PC-9 (cell line): ENCODE measurements at regions of chr12 and their contacts with region 1.

Region 1: GRCh38 chr12:100229058-100229637 is 28.5 kb downstream of the ACTR6 start:
- DNase-seq: peak; percentile 28 to 73
- H3K4me3 ChIP-seq: peak overlapping the region; percentile 45; the same call in 1 of the 2 replicates
- H3K27ac ChIP-seq: peak overlapping the region; percentile 93
- H3K4me1 ChIP-seq: peaks cover 68% of the 10 kb centered on the region
- H3K27me3 ChIP-seq: no peaks in the 10 kb centered on the region
- CTCF ChIP-seq: peak; percentile 46; the same call in 1 of the 2 replicates

Region 2: DNA sequence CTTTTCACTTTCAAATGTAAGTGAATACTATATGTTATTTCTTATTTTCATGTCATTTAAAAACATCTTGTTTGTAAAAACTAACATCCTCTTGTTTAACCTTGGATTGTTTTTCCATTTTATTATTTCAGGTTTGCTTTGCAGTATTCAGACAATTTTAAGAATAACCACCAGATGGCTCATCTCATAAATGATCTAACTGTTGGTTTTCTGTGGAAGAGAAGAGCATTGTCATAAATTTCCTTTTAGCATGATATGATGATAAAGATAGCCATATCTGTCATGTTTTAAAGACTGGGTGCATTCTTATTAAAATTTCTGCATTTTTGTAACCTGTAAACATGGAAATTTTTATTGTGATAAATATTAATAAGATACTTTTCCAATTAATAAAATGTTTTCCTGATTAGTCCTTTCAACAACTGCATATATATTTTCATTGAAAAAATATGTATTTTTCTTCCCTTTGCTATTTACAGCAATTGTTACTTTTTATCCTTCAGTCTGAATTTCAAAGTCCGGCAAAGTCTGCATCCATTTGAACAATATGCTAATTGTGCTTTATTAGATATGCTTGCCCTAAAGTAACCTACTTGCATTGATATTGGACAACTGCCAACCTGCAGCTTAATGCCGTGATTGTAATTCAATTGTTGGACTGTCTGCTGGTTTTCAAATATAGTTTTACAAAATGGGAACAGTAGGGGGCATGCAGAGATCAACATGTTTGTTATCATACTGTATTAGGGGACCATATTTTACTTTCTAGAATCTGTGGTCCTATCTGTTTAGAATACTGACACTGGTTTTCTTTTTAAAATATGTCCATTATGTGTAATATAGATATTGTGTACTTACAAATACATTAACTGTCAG is 418.2 kb before region 1 on chr12:
- CTCF ChIA-PET with region 1: no interaction called
- POLR2A ChIA-PET with region 1: no interaction called
- intact Hi-C with region 1: loop called (anchors 2 kb)
- DNase-seq: no peak
- H3K4me3 ChIP-seq: no peak overlapping the region
- H3K27ac ChIP-seq: no peak overlapping the region
- H3K4me1 ChIP-seq: no peaks in the 10 kb centered on the region
- H3K27me3 ChIP-seq: peaks cover 28% of the 10 kb centered on the region
- CTCF ChIP-seq: peak; percentile 48; the same call in 1 of the 2 replicates

Region 3: GRCh38 chr12:99959547-99960180 is 269.5 kb before region 1 on chr12:
- CTCF ChIA-PET with region 1: no interaction called
- POLR2A ChIA-PET with region 1: no interaction called
- intact Hi-C with region 1: no loop called
- DNase-seq: peak in 1 of 2 experiments; percentile 78
- H3K4me3 ChIP-seq: no peak overlapping the region
- H3K27ac ChIP-seq: no peak overlapping the region
- H3K4me1 ChIP-seq: peaks cover 15% of the 10 kb centered on the region
- H3K27me3 ChIP-seq: peaks cover 69% of the 10 kb centered on the region
- CTCF ChIP-seq: no peak

Region 4: DNA sequence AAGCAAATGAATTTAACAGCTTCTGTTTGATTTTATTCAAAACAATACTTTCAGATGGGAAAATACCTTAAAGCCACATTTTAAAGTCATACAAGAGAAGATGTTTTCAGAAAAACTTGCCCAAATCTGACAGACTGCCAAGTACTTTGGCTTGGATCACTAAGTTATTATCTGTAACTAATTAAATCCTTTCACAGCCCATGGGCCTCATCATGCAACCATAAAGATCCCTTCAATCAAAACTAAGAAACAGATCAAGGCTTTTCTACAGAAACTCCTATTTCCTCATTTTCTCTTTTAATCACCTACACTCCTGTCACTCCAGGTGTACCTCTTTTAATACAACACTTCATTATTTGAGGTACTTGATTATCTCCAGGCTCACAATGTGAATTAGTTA is 114.6 kb before region 1 on chr12:
- CTCF ChIA-PET with region 1: no interaction called
- POLR2A ChIA-PET with region 1: no interaction called
- intact Hi-C with region 1: no loop called
- DNase-seq: no peak
- H3K4me3 ChIP-seq: no peak overlapping the region
- H3K27ac ChIP-seq: no peak overlapping the region
- H3K4me1 ChIP-seq: no peaks in the 10 kb centered on the region
- H3K27me3 ChIP-seq: no peaks in the 10 kb centered on the region
- CTCF ChIP-seq: no peak

Region 5: GRCh38 chr12:100200463-100201181 is 28.5 kb before region 1 on chr12 and contains the start of gene ACTR6:
- CTCF ChIA-PET with region 1: interaction called, 13 read pairs
- POLR2A ChIA-PET with region 1: interaction called, 4 read pairs
- intact Hi-C with region 1: loop called (anchors 2 kb)
- DNase-seq: peak; percentile 90 to 93
- H3K4me3 ChIP-seq: peak within 1 kb of the TSS; percentile 92
- H3K27ac ChIP-seq: peak within 1 kb of the TSS; percentile 37
- H3K4me1 ChIP-seq: peaks cover 26% of the 10 kb centered on the region
- H3K27me3 ChIP-seq: no peaks in the 10 kb centered on the region
- CTCF ChIP-seq: no peak
- total RNA-seq, gene ACTR6: 22.4 and 26.9 TPM in 2 replicates

Region 6: GRCh38 chr12:100266835-100267618 is 37.9 kb after region 1 on chr12 and contains the starts of genes DEPDC4 and SCYL2:
- CTCF ChIA-PET with region 1: interaction called, 6 read pairs
- POLR2A ChIA-PET with region 1: interaction called, 3 read pairs
- intact Hi-C with region 1: loop called (anchors 1 kb)
- DNase-seq: peak; percentile 89 to 92
- H3K4me3 ChIP-seq: peak within 1 kb of the TSS; percentile 76
- H3K27ac ChIP-seq: peak within 1 kb of the TSS; percentile 87
- H3K4me1 ChIP-seq: peaks cover 21% of the 10 kb centered on the region
- H3K27me3 ChIP-seq: no peaks in the 10 kb centered on the region
- CTCF ChIP-seq: no peak
- total RNA-seq, gene DEPDC4: 1.8 and 2.9 TPM in 2 replicates
- total RNA-seq, gene SCYL2: 31.0 and 41.1 TPM in 2 replicates

Region 7: DNA sequence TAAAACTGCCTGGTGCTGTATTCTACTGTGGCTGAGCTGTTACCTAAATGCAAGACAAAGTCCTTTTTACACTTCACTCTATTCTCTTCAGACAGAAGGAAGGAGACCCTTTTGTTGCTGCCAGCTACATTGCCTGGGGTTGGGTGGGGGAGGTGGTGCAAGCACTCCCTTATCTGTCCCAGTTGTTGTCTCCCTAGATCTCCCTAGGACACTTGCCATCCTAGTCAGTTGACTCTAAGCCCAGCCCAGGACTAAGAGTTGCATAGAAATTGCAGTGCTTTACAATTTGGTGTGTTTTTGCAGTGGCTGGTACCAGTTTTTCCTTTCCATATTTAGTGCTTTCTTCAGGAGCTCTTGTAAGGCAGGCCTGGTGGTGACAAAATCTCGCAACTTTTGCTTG is 72.9 kb after region 1 on chr12:
- CTCF ChIA-PET with region 1: no interaction called
- POLR2A ChIA-PET with region 1: no interaction called
- intact Hi-C with region 1: no loop called
- DNase-seq: no peak
- H3K4me3 ChIP-seq: no peak overlapping the region
- H3K27ac ChIP-seq: no peak overlapping the region
- H3K4me1 ChIP-seq: no peaks in the 10 kb centered on the region
- H3K27me3 ChIP-seq: no peaks in the 10 kb centered on the region
- CTCF ChIP-seq: no peak

Region 8: DNA sequence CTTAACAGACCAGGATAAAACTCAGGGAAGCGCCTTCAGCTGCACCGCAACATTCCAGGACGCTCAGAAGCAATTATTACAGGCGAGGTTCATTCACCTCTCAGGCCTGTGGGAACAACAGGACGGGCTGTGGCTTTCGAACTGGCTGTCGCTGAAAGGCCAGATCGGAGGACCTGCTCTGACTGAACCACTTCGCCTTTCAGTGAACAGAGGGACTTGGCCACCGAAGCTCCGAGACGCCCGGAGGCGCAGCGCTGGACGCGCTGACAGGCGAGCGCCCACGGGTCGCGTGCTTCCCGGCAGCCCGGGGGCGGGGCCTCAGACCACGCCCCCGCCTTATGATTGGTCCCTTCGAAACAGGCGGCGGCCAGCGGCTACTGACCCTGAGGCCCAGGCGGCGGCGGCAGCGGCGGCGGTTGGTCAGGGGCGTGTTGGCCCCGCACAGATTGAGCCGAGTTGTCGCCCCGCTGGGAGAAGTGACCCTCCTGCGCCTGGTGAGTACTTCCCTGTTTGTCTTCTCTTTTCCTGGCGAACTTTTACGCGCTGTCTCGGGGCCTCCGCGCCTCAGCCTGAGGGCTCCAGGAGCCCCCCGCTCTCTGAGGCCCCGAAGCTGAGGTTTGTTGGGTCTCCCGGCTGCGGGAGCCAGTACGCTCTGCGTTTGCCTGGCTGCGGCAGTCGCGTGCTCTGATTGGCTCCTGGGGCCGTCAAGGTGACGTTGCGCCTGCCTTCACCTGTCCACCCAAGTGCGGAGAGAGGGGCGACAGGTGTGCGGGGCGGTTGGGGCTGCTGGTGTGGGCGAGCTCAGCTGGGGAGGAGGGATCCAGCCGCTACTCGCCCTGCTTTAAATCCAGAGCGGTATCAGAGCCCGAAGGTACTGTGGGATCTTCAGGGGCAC is 344.4 kb after region 1 on chr12 and contains the start of gene GAS2L3:
- CTCF ChIA-PET with region 1: no interaction called
- POLR2A ChIA-PET with region 1: interaction called, 10 read pairs
- intact Hi-C with region 1: loop called (anchors 1 kb)
- DNase-seq: peak; percentile 71 to 89
- H3K4me3 ChIP-seq: peak within 1 kb of the TSS; percentile 82
- H3K27ac ChIP-seq: peak within 1 kb of the TSS; percentile 37
- H3K4me1 ChIP-seq: peaks cover 11% of the 10 kb centered on the region
- H3K27me3 ChIP-seq: no peaks in the 10 kb centered on the region
- CTCF ChIP-seq: no peak
- total RNA-seq, gene GAS2L3: 28.6 and 31.9 TPM in 2 replicates